ENCODE measurements at regions of chr1 and their contacts with region 1.

Region 1: DNA sequence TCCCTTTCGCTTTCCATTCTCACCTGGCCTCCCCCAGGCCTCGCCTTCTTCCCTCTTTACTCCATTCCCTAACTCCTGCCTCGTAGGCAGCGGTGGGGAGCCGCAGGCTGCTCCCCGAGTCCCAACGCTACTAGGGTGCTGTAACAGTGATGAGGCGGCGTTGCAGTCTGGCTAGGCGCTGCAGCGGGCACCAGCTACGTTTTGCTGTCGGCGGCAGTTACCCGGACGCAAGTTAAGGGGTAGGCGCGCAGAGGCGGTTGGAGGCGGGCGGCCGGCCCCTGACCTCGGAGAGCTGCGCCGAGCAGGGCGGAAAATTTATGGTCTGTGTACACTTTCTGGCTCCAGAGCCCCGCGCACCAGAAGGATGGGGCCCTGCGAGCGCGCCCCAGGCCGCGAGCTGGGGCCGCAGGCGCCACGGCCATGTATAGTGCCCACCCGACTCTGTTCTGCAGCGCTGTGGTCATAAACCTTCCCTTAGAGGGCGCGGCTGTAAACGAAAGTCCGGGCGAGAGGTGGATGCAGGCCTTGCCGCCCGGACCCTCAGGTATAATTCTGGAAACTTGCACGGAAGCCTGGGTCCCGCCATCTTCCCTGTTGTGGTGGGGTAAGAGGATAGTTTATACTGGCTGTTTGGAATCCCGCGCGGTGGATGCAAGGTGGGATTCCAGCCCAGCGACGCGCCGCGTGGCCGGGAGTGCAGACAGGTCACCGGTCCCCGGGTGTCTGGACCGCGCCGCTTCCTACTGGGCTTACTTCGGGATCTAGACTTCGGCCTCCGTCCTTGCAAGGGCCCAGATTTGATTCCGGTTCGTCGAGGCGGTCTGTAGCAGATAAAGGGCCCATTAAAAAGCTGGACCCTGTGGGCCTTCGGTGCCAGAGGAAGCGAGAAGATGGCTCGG is 15.0 kb downstream of the HLX start:
- DNase-seq: peak; percentile 68
- ATAC-seq: peak; percentile 50

Region 2: GRCh38 chr1:220928725-220929300 is 34.5 kb after region 1 on chr1:
- intact Hi-C with region 1: no loop called
- DNase-seq: no peak
- ATAC-seq: no peak

Region 3: DNA sequence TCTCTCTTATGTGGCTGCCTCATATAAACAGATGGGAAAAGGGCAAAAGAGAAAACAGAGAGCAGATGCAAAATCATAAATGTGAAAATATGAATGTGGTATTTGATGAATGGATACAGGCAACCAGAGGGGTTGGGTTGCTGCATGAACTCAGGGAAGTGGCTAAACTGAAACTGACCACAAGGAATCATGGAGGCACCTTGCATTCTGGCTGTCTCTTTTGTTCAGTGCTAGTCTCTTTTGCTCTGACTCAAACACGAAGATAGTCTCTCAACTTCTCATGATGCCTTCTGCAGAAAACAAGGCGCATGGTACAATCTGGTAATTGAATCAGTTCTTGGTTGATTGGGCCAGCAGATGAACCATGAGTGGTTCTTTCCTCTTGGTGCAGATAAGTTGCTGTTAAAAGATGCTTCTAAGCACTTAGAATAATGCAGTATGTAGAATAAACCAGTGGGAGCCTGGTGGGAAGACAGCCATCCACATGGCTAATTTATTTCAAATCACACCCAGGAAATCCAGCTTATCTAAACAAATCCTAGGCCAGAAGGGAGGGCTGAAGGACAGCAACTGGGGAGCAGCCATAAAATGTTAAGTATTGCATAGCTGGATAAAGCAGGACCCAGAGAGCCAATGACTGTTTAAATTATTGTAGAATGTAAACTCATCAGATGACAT is 49.2 kb after region 1 on chr1:
- intact Hi-C with region 1: no loop called
- DNase-seq: no peak
- ATAC-seq: no peak

Region 4: DNA sequence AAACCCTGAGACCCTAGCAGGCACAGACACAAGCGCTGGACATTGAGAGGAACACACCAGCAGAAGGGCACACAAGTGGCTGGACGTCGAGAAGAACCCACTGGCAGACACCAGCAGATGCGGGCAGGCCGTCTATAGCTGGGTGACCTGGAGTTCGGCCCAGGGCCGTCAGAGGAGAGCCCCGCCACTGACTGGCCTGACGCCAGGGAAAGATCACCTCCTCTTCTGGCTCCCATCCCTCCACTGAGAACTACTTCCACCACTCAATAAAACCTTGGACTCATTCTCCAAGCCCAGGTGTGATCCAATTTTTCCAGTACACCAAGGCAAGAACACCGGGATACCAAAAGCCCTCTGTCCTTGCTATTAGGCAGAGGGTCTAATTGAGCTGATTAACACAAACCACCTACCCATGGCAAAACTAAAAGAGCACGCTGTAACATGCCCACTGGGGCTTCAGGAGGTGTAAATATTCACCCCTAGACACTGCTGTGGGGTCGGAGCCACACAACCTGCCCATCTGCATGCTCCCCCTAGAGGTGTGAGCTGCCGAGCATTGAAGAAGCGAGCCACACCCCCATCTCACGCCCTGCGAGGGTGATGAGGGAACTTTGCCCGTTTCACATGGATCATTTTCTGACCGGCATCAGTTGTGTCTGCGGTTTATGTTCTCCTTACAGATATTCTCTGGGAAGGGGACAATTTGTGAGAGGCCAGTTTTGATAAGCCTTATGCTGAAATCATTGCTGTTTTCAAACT is 89.8 kb after region 1 on chr1:
- intact Hi-C with region 1: loop called (anchors 10 kb)
- DNase-seq: no peak
- ATAC-seq: no peak